Panc1 (cell line): ENCODE measurements at regions of chr1 and their contacts with region 1.

Region 1: GRCh38 chr1:89358287-89358893 is 5.5 kb upstream of the GBP6 start:
- DNase-seq: peak; percentile 33
- ATAC-seq: peak; percentile 96
- H3K4me3 ChIP-seq: no peak overlapping the region
- H3K27ac ChIP-seq: no peak overlapping the region
- H3K4me1 ChIP-seq: no peaks in the 10 kb centered on the region
- H3K27me3 ChIP-seq: peaks cover 2% of the 10 kb centered on the region; the same call in 1 of the 2 replicates
- CTCF ChIP-seq: peak; percentile 88

Region 2: DNA sequence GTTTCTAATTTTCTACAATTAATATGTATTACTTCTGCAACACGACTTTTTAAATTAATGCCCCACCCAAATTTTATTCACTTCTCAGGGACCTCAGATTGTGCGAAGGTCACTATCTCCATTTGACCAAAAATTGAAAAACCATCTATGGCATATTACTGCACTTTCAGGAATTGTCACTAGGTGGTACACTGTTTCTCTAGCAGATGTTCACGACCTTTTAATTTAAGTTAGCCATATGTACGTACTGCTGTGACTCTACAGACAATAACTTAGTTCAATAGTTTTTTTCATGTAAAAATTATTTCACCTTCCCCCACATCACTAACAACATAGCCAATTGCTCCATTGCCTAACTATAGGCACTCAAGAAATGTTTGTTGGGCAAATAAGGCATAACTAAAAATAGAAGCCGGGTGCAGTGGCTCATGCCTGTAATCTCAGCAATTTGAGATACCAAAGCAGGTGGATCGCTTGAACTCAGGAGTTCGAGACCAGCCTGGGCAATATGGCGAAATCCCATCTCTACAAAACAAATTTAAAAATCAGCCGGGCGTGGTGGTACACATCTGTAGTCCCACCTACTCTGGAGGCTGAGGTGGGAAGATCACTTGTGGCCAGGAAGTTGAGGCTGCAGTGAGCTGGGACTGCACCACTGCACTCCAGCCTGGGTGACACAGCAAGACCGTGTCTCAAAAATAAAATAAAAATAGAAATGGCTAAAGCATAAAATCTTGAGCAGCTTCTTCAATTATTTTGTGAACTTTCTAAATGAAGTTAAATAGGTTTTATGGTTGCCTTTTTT is 750.0 kb before region 1 on chr1:
- CTCF ChIA-PET with region 1: no interaction called
- POLR2A ChIA-PET with region 1: interaction called, 16 read pairs
- in situ Hi-C with region 1: no loop called
- intact Hi-C with region 1: no loop called
- DNase-seq: peak; percentile 39
- ATAC-seq: peak; percentile 82
- H3K4me3 ChIP-seq: no peak overlapping the region
- H3K27ac ChIP-seq: no peak overlapping the region
- H3K4me1 ChIP-seq: 0 out of 2 replicates have a peak, but pooled peaks cover 3% of the 10 kb centered on the region
- H3K27me3 ChIP-seq: peaks cover 3% of the 10 kb centered on the region; the same call in 1 of the 2 replicates
- CTCF ChIP-seq: peak; percentile 83

Region 3: DNA sequence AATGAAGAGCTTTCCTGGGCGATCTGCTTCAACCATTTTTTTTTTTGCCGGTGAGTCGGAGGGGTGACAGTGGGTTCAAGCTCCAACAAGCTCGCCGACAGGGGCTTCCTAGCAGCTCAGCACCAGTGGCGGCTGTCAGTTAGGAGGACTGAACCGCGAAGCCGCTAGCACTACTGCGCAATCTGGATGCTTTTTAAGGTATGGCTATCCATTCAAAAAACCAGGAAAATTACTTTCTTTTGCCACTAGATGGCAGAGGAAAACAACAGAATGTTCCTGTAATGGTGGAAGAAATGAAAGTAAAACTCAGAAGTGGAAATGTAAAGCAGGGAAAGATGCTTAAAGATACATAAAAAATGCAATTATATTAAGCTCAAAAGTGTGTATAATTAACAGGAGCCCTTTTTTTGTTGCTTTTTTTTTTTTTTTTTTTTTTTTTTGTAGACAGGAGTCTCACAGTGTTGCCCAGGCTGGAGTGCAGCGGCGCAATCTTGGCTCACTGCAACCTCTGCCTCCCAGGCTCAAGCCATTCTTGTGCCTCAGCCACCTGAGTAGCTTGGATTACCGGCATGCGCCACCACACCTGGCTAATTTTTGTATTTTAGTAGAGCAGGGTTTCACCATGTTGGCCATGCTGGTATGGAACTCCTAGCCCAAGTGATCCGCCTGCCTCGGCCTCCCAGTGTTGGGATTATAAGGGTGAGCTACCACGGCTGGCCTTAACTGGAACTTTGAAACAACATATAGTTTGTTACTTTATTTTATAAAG is 374.4 kb before region 1 on chr1:
- CTCF ChIA-PET with region 1: interaction called, 10 read pairs
- POLR2A ChIA-PET with region 1: interaction called, 3 read pairs
- in situ Hi-C with region 1: no loop called
- intact Hi-C with region 1: no loop called
- DNase-seq: peak; percentile 64
- ATAC-seq: peak; percentile 87
- H3K4me3 ChIP-seq: peak overlapping the region; percentile 46 to 61
- H3K27ac ChIP-seq: peak overlapping the region; percentile 68
- H3K4me1 ChIP-seq: peaks cover 17% of the 10 kb centered on the region
- H3K27me3 ChIP-seq: no peaks in the 10 kb centered on the region
- CTCF ChIP-seq: peak; percentile 86

Region 4: GRCh38 chr1:88998716-88999115 is 359.7 kb before region 1 on chr1:
- CTCF ChIA-PET with region 1: interaction called, 4 read pairs
- POLR2A ChIA-PET with region 1: no interaction called
- in situ Hi-C with region 1: no loop called
- intact Hi-C with region 1: loop called (anchors 1 kb)
- DNase-seq: peak; percentile 72
- ATAC-seq: peak; percentile 96
- H3K4me3 ChIP-seq: no peak overlapping the region
- H3K27ac ChIP-seq: no peak overlapping the region
- H3K4me1 ChIP-seq: no peaks in the 10 kb centered on the region
- H3K27me3 ChIP-seq: peaks cover 4% of the 10 kb centered on the region; the same call in 1 of the 2 replicates
- CTCF ChIP-seq: peak; percentile 67

Region 5: GRCh38 chr1:89085781-89086180 is 272.6 kb before region 1 on chr1:
- CTCF ChIA-PET with region 1: interaction called, 9 read pairs
- POLR2A ChIA-PET with region 1: no interaction called
- in situ Hi-C with region 1: no loop called
- intact Hi-C with region 1: loop called (anchors 2 kb)
- DNase-seq: peak; percentile 22
- ATAC-seq: peak; percentile 85
- H3K4me3 ChIP-seq: no peak overlapping the region
- H3K27ac ChIP-seq: no peak overlapping the region
- H3K4me1 ChIP-seq: no peaks in the 10 kb centered on the region
- H3K27me3 ChIP-seq: 0 out of 2 replicates have a peak, but pooled peaks cover 3% of the 10 kb centered on the region
- CTCF ChIP-seq: peak; percentile 60

Region 6: GRCh38 chr1:89331890-89332289 is 26.5 kb before region 1 on chr1:
- CTCF ChIA-PET with region 1: interaction called, 11 read pairs
- POLR2A ChIA-PET with region 1: no interaction called
- in situ Hi-C with region 1: no loop called
- intact Hi-C with region 1: no loop called
- DNase-seq: no peak
- ATAC-seq: no peak
- H3K4me3 ChIP-seq: no peak overlapping the region
- H3K27ac ChIP-seq: no peak overlapping the region
- H3K4me1 ChIP-seq: no peaks in the 10 kb centered on the region
- H3K27me3 ChIP-seq: no peaks in the 10 kb centered on the region
- CTCF ChIP-seq: no peak

Region 7: DNA sequence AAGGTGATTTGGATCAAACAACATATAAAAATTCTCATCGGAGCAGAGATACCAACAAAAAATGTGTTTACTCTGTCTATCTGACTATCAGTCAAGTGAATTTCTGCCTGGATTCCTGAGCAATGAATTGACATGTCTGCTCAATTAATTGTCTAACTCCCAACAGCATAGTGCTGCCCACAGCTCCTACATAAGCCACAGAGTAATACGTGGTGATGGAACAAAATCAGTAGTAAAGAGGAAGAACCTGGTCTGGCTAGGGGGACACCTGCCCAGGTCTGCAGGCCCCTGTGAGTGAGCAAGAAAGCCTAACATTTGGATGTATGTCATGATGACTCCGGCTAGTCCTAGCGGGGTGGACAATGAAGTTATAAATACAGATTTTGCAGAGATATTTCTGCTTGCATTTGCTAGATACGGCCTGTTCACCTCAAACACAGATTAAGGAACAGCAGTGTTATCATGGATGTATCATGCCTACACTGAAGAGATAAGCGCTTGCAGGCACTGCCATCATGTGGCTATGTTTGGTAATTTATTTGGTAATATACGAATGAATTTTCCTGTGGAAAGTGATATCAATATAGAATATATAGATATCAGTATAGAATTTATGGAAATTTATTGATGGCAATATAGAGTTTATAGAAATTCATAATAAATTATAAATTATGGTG is 96.6 kb after region 1 on chr1:
- CTCF ChIA-PET with region 1: no interaction called
- POLR2A ChIA-PET with region 1: no interaction called
- in situ Hi-C with region 1: no loop called
- intact Hi-C with region 1: loop called (anchors 5 kb)
- DNase-seq: peak; percentile 38
- ATAC-seq: peak; percentile 89
- H3K4me3 ChIP-seq: no peak overlapping the region
- H3K27ac ChIP-seq: no peak overlapping the region
- H3K4me1 ChIP-seq: 0 out of 2 replicates have a peak, but pooled peaks cover 3% of the 10 kb centered on the region
- H3K27me3 ChIP-seq: peaks cover 7% of the 10 kb centered on the region; the same call in 1 of the 2 replicates
- CTCF ChIP-seq: peak; percentile 79